HEK293T (cell line): ENCODE measurements at regions of chr18 and their contacts with region 1.

Region 1: DNA sequence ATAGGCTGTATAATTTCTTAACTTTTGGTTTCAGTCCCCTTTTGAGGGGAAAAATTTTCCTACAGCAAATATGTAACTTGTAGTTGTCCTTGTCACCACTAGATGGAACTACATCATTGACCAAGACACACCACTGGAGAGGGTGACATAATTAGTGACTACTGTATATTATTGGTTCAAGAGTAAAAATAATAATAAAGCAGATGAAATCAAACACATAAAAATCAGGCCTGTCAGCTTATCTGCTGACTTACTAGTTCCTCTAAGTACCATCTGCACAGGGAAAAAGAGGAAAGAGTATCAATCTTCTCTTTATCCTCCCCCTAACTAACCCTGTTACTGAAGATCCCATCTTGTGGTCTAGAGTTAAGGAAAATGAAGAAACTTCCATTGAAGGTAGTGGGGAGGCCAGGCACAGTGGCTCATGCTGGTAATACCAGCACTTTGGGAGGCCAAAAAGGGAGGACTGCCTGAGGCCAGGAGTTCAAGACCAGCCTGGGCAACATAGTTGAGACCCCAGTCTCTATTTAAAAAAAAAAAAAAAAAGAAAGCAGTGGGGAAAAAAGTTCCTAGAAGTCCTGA is 29.6 kb upstream of the ENOSF1 start:
- DNase-seq: peak; percentile 49

Region 2: DNA sequence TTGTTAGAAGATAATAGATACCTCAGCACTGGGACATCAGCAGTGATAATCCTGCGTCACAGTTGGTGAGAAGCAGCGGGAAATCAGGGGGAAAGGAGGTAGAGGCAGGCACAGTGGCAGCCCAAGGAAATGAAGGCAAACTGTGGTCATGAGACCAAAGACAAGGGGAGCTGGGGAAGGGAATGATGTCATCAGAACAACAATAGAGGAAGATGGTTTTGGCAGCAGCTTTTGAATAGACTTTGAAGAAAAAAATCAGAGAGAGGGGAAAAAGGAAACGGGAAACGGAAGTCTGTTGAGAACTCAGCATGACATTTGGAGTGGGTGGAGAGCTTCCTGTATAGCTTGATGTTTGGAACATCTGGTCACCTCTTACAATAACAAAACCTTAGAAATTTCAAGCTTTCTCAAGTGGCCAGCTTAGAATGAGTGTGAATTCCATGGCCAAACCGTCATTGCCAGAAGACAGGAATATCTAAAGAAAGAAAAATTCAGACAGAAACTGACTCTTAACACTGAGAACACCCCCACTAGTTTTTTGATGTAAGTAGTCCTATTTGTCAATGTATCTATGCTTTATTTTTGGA is 88.4 kb after region 1 on chr18:
- CTCF ChIA-PET with region 1: interaction called, 20 read pairs
- POLR2A ChIA-PET with region 1: interaction called, 3 read pairs
- DNase-seq: no peak